A549 (cell line): ENCODE measurements at regions of chr7 and their contacts with region 1.

Region 1: GRCh38 chr7:30740424-30741181 is 11.3 kb upstream of the INMT start:
- DNase-seq: peak; percentile 56 to 96
- ATAC-seq: peak; percentile 81 to 92
- H3K4me3 ChIP-seq: no peak overlapping the region
- H3K27ac ChIP-seq: no peak overlapping the region
- H3K4me1 ChIP-seq: no peaks in the 10 kb centered on the region
- CTCF ChIP-seq: peak; percentile 92
- EP300 ChIP-seq: no peak
- POLR2A ChIP-seq: no peak
- RAD21 ChIP-seq: peak; percentile 91 to 96

Region 2: DNA sequence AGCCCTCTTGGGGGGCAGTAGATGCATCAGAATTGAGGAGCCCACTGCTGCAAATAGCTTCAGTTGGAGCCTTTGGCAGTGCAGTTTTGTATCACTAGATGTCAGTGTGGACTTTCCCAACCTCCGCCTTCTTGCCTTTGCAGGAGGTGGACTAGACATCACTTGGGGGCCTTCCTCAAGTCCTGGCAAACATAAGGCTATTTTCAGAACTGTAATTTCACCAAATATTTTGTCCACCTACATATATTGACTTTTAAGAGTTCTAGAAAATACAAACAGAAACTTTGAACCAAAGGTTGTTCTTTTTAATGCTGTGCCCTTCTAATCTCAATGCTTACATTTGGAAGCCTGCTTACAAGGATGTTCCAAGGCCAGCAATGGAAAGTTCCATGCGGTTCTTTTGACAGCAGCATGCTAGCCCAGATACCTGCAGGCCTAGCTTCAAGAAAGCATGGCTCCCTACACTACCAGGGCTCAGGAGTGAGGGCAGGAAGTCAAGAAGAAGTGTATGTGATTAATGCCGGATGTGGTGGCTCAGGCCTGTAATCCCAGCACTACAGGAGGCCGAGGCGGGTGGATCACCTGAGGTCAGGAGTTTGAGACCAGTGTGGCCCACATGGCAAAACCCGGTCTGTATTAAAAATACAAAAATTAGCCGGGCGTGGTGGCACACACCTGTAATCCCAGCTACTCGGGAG is 464.3 kb before region 1 on chr7:
- CTCF ChIA-PET with region 1: interaction called, 21 read pairs
- POLR2A ChIA-PET with region 1: no interaction called
- DNase-seq: peak; percentile 40 to 70
- ATAC-seq: peak; percentile 87 to 96
- H3K4me3 ChIP-seq: no peak overlapping the region
- H3K27ac ChIP-seq: no peak overlapping the region
- H3K4me1 ChIP-seq: no peaks in the 10 kb centered on the region
- CTCF ChIP-seq: peak; percentile 81
- EP300 ChIP-seq: no peak
- POLR2A ChIP-seq: no peak
- RAD21 ChIP-seq: peak; percentile 90 to 92

Region 3: GRCh38 chr7:30564243-30564892 is 176.2 kb before region 1 on chr7:
- CTCF ChIA-PET with region 1: interaction called, 10 read pairs
- POLR2A ChIA-PET with region 1: no interaction called
- DNase-seq: peak; percentile 64 to 83
- ATAC-seq: peak; percentile 98 to 99
- H3K4me3 ChIP-seq: no peak overlapping the region
- H3K27ac ChIP-seq: no peak overlapping the region
- H3K4me1 ChIP-seq: no peaks in the 10 kb centered on the region
- CTCF ChIP-seq: peak; percentile 91
- EP300 ChIP-seq: no peak
- POLR2A ChIP-seq: no peak
- RAD21 ChIP-seq: peak; percentile 89 to 93

Region 4: GRCh38 chr7:30682212-30683083 is 58.2 kb before region 1 on chr7 and contains the start of gene CRHR2:
- CTCF ChIA-PET with region 1: interaction called, 19 read pairs
- POLR2A ChIA-PET with region 1: no interaction called
- DNase-seq: peak in 1 of 2 experiments; percentile 20
- ATAC-seq: peak; percentile 52 to 83
- H3K4me3 ChIP-seq: peak within 1 kb of the TSS; percentile 55
- H3K27ac ChIP-seq: peak within 1 kb of the TSS in 1 of 2 experiments; percentile 14; a peak in 2 of 6 replicates
- H3K4me1 ChIP-seq: peaks cover 12% of the 10 kb centered on the region; the same call in 2 of the 3 replicates
- CTCF ChIP-seq: 0 out of 3 replicates have a peak, but pooled peaks have one; percentile 8
- EP300 ChIP-seq: no peak
- POLR2A ChIP-seq: no peak
- RAD21 ChIP-seq: no peak
- polyA plus RNA-seq, gene CRHR2: not detected in 2 replicates

Region 5: GRCh38 chr7:30717181-30717580 is 23.4 kb before region 1 on chr7:
- CTCF ChIA-PET with region 1: interaction called, 13 read pairs
- POLR2A ChIA-PET with region 1: no interaction called
- DNase-seq: peak in 1 of 2 experiments; percentile 27
- ATAC-seq: peak in 1 of 2 experiments; percentile 52; a peak in 2 of 6 replicates
- H3K4me3 ChIP-seq: no peak overlapping the region
- H3K27ac ChIP-seq: no peak overlapping the region
- H3K4me1 ChIP-seq: no peaks in the 10 kb centered on the region
- CTCF ChIP-seq: no peak
- EP300 ChIP-seq: no peak
- POLR2A ChIP-seq: no peak
- RAD21 ChIP-seq: no peak

Region 6: DNA sequence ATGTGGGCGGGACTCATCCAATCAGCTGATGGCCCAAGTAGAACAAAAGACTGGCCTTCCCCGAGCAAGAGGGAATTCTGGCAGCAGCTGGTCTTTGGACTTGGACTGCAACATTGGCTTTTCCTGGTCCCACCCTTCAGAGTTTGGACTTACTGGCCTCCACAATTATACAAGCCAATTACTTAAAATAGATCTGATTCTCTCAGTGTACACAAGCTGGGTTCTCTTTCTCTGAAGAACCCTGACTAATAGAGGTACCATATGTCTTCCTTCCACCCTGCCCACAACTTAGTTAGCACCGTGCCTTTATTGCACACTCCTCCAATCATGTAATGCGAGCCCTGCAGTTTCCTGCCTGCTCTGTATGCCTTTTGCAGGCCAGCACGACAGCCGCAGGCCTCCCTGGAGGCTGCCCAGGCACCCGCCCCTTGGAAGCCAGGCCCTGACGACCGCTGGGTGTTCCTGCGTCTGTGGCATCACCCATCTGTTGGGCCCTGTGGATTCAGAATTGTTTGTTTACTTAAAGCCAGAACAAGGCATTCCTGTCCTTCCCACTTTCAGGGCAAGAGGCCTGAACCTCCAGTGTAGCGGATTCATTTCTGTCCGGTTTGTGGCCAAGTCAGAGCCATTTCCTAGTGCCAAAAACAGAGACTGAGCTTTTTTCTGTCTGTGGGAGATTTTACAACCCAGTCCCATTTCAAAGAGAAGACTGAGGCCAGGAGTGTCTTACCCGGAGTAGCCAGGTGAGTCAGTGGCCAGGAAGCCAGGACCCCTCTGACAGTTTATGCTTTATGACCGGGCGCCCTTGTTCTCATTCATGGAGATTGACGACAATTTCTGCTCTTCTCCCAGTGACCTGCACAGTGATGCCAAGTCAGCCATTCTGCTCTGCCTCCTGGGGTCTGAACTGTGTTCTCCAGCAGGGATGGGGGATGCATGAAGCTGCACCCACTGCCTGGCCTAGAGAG is 10.4 kb after region 1 on chr7:
- CTCF ChIA-PET with region 1: interaction called, 18 read pairs
- POLR2A ChIA-PET with region 1: no interaction called
- DNase-seq: no peak
- ATAC-seq: no peak
- H3K4me3 ChIP-seq: no peak overlapping the region
- H3K27ac ChIP-seq: no peak overlapping the region
- H3K4me1 ChIP-seq: no peaks in the 10 kb centered on the region
- CTCF ChIP-seq: no peak
- EP300 ChIP-seq: no peak
- POLR2A ChIP-seq: no peak
- RAD21 ChIP-seq: no peak